Mammary epithelial cell (primary cell): ENCODE measurements at regions of chr7 and their contacts with region 1.

Region 1: GRCh38 chr7:74206589-74207120 is 3.2 kb upstream of the LAT2 start:
- DNase-seq: peak; percentile 52
- H3K4me3 ChIP-seq: peak overlapping the region in 1 of 3 experiments; percentile 20
- H3K27ac ChIP-seq: no peak overlapping the region
- H3K4me1 ChIP-seq: peaks cover 13% of the 10 kb centered on the region
- H3K27me3 ChIP-seq: no peaks in the 10 kb centered on the region
- CTCF ChIP-seq: peak; percentile 76 to 95

Region 2: DNA sequence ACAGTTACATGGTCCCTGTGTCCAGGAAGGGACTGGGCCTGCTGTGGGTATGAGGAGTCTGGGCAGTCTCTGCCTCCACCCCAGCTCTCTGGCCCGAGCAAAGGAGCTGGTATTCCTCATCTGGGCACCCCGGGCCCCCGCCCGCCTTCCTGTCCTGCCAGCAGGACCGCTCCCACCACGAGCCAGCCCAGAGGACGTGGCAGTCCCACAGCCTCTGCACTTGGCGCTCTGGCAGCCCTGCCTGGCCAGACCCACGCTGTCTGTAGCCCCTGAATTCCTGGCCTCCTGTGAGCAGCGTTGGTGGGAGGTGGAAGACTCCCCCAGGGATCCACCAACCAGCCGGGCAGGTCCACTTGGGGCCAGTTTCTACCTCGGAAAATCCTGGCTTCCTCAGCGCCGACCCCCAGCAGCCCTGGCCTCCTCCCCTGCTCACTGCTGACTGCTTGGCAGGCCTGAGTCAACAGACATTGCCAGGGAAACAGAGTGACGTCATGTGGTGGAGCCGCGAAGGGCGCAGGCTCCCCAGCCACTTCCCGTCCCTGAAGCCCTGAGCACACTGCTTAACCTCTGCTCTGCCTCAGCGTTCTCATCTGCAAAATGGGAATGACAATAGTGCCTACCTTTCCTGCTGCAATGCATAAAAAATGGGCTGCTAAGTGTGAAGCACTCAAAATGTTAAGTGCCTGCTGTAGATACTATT is 144.7 kb before region 1 on chr7:
- CTCF ChIA-PET with region 1: no interaction called
- dilution Hi-C with region 1: no loop called
- in situ Hi-C with region 1: loop called in 1 of 2 experiments (anchors 10 kb)
- intact Hi-C with region 1: no loop called
- DNase-seq: peak; percentile 84
- H3K4me3 ChIP-seq: no peak overlapping the region
- H3K27ac ChIP-seq: no peak overlapping the region
- H3K4me1 ChIP-seq: peaks cover 17% of the 10 kb centered on the region
- H3K27me3 ChIP-seq: no peaks in the 10 kb centered on the region
- CTCF ChIP-seq: no peak

Region 3: GRCh38 chr7:74185636-74186035 is 21.0 kb before region 1 on chr7:
- CTCF ChIA-PET with region 1: no interaction called
- dilution Hi-C with region 1: no loop called
- in situ Hi-C with region 1: no loop called
- intact Hi-C with region 1: no loop called
- DNase-seq: no peak
- H3K4me3 ChIP-seq: no peak overlapping the region
- H3K27ac ChIP-seq: no peak overlapping the region
- H3K4me1 ChIP-seq: peaks cover 56% of the 10 kb centered on the region
- H3K27me3 ChIP-seq: no peaks in the 10 kb centered on the region
- CTCF ChIP-seq: no peak

Region 4: GRCh38 chr7:74254129-74254857 is 47.6 kb after region 1 on chr7 and contains the start of gene RFC2:
- CTCF ChIA-PET with region 1: no interaction called
- dilution Hi-C with region 1: no loop called
- in situ Hi-C with region 1: no loop called
- intact Hi-C with region 1: loop called (anchors 5 kb)
- DNase-seq: peak; percentile 95
- H3K4me3 ChIP-seq: peak within 1 kb of the TSS; percentile 81 to 97 (median 88)
- H3K27ac ChIP-seq: peak within 1 kb of the TSS; percentile 91
- H3K4me1 ChIP-seq: peaks cover 8% of the 10 kb centered on the region
- H3K27me3 ChIP-seq: no peaks in the 10 kb centered on the region
- CTCF ChIP-seq: no peak
- total RNA-seq, gene RFC2: 15.0 to 43.9 TPM